GM10248 (cell line): ENCODE measurements at regions of chr3 and their contacts with region 1.

Region 1: GRCh38 chr3:122101646-122102045 is 46.5 kb downstream of the CD86 start:
- DNase-seq: no peak
- CTCF ChIP-seq: peak; percentile 73

Region 2: GRCh38 chr3:122021811-122022401 is 79.7 kb before region 1 on chr3 and contains the start of gene ILDR1:
- CTCF ChIA-PET with region 1: interaction called, 11 read pairs
- POLR2A ChIA-PET with region 1: no interaction called
- DNase-seq: peak; percentile 72
- CTCF ChIP-seq: no peak

Region 3: DNA sequence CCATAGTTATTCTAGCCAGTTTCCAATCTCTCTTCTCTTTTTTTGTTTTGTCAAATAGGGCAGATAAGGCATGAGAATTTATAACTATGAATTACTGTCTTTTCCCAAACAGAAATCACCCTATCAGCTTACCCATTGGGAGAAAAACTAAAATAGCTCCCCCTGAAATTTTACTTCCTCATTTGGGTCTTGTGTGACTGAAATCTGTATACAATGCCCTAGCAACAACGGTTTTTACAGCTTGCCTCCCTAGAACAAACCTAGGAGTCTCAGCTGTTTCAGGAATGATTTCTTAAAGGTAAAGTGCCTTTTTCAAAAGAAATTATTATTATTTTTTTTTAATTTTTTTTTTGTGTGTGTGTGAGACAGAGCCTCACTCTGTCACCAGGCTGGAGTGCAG is 10.3 kb after region 1 on chr3:
- CTCF ChIA-PET with region 1: interaction called, 22 read pairs
- POLR2A ChIA-PET with region 1: no interaction called
- DNase-seq: no peak
- CTCF ChIP-seq: no peak

Region 4: DNA sequence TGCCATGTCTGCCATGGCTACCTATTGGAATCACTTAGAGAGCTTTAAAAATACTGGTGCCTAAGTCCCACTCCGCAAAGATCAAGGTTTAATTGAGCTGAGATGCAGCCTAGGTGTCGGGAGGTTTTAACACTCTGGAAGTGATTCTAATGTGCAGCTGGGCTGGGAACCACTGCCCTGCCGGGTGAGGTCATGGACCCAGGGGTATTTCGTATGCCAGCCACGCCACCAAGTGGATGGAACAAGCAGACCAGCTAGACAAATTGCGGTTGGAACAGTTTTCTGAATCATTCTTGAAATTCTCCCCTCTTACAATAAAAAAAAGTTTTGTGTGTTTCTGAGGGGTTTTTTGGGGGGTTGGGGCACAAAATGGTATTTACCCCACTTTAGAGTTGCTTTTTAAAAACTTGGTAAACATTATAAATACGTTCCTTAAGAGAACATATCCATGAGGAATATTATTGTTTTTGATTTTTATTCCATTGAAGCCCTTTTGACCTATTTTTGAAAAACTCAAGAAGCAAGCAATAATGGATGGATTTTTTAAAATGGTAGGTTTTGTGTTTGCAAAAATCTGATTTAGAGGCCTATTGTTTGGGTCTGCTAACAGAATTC is 157.2 kb after region 1 on chr3:
- CTCF ChIA-PET with region 1: interaction called, 98 read pairs
- POLR2A ChIA-PET with region 1: no interaction called
- DNase-seq: peak; percentile 76
- CTCF ChIP-seq: peak; percentile 74

Region 5: GRCh38 chr3:122356415-122356814 is 254.8 kb after region 1 on chr3:
- CTCF ChIA-PET with region 1: interaction called, 24 read pairs
- POLR2A ChIA-PET with region 1: no interaction called
- DNase-seq: peak; percentile 47
- CTCF ChIP-seq: peak; percentile 53

Region 6: GRCh38 chr3:122392868-122393844 is 291.5 kb after region 1 on chr3:
- CTCF ChIA-PET with region 1: interaction called, 12 read pairs
- POLR2A ChIA-PET with region 1: no interaction called
- DNase-seq: peak; percentile 41
- CTCF ChIP-seq: peak; percentile 58